Mammary epithelial cell (primary cell): ENCODE measurements at regions of chr17 and their contacts with region 1.

Region 1: DNA sequence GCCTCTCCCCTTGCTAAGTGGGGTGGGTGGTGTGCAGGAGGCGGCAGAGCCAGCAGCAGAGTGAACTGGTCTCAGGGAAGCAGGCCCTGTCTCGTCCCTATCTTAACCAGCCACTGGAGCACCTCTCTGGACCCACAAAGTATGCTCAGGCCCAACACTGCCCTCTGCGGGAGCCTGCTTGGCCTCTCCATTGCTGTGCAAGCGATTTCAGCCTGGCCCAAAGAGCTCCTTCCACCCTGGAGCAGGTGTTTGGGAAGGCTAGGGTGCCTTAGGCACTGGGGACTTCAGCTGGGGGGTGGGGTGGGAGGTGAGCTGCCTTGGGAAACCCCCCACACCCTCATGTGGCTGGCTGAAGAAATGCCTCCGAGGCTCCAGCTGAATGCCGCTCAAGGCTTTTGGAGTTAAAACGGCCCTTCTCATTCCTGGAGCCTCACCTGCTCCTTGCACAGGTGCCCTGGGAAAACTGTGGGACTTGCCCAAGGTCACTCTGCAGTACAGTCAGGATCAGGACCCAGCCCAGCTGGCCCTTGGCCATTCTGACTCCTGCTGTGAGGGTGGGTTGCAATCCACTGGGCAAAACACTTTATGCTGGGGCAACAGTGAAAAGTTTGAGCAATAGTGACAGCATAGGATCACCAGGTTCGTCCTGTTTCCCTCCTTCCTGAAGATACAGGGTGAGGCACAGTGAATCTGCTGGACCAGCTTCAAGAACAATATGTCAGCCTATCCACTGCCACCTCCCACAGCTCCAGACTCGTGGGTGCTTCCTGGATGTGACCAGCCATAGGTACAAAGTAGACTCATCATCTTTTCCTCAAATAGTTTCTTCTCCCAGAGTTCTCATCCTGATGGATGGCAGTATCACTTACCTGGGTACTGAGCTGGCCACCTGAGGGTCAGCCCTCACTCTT is 5.9 kb upstream of the UBE2O start:
- DNase-seq: peak; percentile 56
- H3K4me3 ChIP-seq: no peak overlapping the region
- H3K27ac ChIP-seq: no peak overlapping the region
- H3K4me1 ChIP-seq: no peaks in the 10 kb centered on the region
- H3K27me3 ChIP-seq: no peaks in the 10 kb centered on the region
- CTCF ChIP-seq: peak; percentile 71 to 88

Region 2: DNA sequence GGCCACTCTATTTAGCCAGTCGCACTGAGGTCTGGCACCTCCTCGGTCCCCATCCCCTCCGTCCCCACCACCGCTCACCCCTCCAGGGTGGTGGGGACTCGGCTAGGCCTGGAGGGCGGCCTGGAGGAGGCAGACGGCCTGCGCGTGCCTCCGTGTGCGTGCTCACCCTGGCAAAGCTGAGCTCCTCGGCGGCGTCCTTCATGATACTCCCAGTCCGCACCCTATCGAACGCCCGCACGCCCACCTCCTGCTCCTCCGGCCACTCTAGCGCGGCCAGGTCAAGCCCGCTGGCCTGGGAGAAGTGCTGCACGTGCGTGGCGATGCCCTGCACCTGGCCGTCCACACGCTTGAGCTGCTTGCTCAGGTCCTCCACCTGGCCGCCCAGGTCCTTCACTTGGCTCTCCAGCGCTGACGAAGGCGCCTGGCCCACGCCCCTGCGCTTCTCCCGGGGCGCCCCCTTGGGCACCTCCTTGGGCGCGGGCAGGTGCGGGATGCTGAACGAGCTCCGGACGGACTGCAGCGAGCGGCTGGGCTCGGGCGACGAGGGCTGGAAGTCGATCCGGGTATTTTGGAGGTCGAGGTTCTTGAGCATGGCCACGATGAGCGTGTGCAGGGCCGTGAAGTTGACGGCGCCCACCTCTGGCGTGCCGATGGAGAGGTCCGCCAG is 151.4 kb before region 1 on chr17:
- CTCF ChIA-PET with region 1: no interaction called
- dilution Hi-C with region 1: no loop called
- in situ Hi-C with region 1: no loop called
- intact Hi-C with region 1: loop called (anchors 2 kb)
- DNase-seq: no peak
- H3K4me3 ChIP-seq: no peak overlapping the region
- H3K27ac ChIP-seq: no peak overlapping the region
- H3K4me1 ChIP-seq: no peaks in the 10 kb centered on the region
- H3K27me3 ChIP-seq: no peaks in the 10 kb centered on the region
- CTCF ChIP-seq: no peak

Region 3: GRCh38 chr17:76474894-76475293 is 16.1 kb after region 1 on chr17:
- CTCF ChIA-PET with region 1: no interaction called
- dilution Hi-C with region 1: no loop called
- in situ Hi-C with region 1: no loop called
- intact Hi-C with region 1: no loop called
- DNase-seq: no peak
- H3K4me3 ChIP-seq: no peak overlapping the region
- H3K27ac ChIP-seq: no peak overlapping the region
- H3K4me1 ChIP-seq: no peaks in the 10 kb centered on the region
- H3K27me3 ChIP-seq: no peaks in the 10 kb centered on the region
- CTCF ChIP-seq: no peak

Region 4: GRCh38 chr17:76506408-76507349 is 47.8 kb after region 1 on chr17:
- CTCF ChIA-PET with region 1: no interaction called
- dilution Hi-C with region 1: loop called (anchors 5 kb)
- in situ Hi-C with region 1: no loop called
- intact Hi-C with region 1: loop called (anchors 1 kb)
- DNase-seq: peak; percentile 54
- H3K4me3 ChIP-seq: no peak overlapping the region
- H3K27ac ChIP-seq: no peak overlapping the region
- H3K4me1 ChIP-seq: peaks cover 8% of the 10 kb centered on the region
- H3K27me3 ChIP-seq: no peaks in the 10 kb centered on the region
- CTCF ChIP-seq: peak; percentile 85 to 95

Region 5: DNA sequence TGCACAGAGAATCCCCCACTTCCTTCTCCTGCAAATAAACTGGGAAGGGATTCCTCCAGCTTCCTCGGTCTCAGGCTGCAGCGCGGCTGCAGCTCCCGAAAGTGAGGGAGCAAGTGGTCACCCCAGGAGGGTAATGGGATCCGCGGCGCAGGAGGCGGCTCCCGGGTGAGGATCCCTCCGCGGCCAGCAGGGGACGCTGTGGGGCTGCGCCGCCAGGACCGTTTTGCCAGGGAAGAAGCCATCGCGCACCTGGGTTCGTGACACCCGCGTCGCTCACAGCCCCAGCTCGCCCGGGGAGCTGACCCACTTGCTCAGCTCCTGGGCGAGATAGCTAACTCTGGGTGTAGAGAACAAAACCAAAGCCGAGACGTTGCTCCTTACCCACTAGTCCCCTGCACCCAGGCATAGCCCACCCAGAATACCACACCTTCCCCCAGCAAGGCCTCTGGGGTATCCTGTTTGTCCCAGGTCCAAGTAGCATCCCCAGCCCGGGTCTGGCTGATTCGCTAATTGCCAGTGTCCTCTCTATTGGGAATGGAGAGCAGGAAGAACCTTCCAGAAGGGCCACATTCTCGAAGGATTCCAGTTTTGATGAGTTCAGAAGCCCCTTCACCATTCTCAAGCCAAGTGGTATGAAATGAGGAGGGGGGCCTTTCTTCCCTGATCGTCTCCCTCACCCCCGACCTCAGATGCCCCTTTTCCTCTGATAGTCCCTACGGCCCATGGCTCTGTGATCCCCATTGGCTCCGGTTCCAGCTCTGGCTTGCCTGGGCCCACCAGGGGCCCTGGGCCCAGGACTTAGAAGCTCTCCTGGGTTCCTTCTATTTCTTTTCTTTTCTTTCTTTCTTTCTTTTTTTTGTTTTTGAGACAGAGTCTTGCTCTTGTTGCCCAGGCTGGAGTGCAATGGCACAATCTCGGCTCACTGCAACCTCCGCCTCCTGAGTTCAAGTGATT is 64.5 kb after region 1 on chr17:
- CTCF ChIA-PET with region 1: no interaction called
- dilution Hi-C with region 1: no loop called
- in situ Hi-C with region 1: no loop called
- intact Hi-C with region 1: no loop called
- DNase-seq: peak; percentile 58
- H3K4me3 ChIP-seq: no peak overlapping the region
- H3K27ac ChIP-seq: no peak overlapping the region
- H3K4me1 ChIP-seq: peaks cover 27% of the 10 kb centered on the region
- H3K27me3 ChIP-seq: peaks cover 5% of the 10 kb centered on the region
- CTCF ChIP-seq: peak; percentile 89 to 100

Region 6: GRCh38 chr17:76547184-76547641 is 88.4 kb after region 1 on chr17:
- CTCF ChIA-PET with region 1: no interaction called
- dilution Hi-C with region 1: loop called (anchors 5 kb)
- in situ Hi-C with region 1: no loop called
- intact Hi-C with region 1: no loop called
- DNase-seq: no peak
- H3K4me3 ChIP-seq: no peak overlapping the region
- H3K27ac ChIP-seq: peak overlapping the region; percentile 68
- H3K4me1 ChIP-seq: peaks cover 56% of the 10 kb centered on the region
- H3K27me3 ChIP-seq: no peaks in the 10 kb centered on the region
- CTCF ChIP-seq: peak; percentile 48 to 73

Region 7: GRCh38 chr17:76569607-76570279 is 110.9 kb after region 1 on chr17:
- CTCF ChIA-PET with region 1: no interaction called
- dilution Hi-C with region 1: no loop called
- in situ Hi-C with region 1: no loop called
- intact Hi-C with region 1: no loop called
- DNase-seq: no peak
- H3K4me3 ChIP-seq: no peak overlapping the region
- H3K27ac ChIP-seq: no peak overlapping the region
- H3K4me1 ChIP-seq: no peaks in the 10 kb centered on the region
- H3K27me3 ChIP-seq: no peaks in the 10 kb centered on the region
- CTCF ChIP-seq: no peak

Region 8: DNA sequence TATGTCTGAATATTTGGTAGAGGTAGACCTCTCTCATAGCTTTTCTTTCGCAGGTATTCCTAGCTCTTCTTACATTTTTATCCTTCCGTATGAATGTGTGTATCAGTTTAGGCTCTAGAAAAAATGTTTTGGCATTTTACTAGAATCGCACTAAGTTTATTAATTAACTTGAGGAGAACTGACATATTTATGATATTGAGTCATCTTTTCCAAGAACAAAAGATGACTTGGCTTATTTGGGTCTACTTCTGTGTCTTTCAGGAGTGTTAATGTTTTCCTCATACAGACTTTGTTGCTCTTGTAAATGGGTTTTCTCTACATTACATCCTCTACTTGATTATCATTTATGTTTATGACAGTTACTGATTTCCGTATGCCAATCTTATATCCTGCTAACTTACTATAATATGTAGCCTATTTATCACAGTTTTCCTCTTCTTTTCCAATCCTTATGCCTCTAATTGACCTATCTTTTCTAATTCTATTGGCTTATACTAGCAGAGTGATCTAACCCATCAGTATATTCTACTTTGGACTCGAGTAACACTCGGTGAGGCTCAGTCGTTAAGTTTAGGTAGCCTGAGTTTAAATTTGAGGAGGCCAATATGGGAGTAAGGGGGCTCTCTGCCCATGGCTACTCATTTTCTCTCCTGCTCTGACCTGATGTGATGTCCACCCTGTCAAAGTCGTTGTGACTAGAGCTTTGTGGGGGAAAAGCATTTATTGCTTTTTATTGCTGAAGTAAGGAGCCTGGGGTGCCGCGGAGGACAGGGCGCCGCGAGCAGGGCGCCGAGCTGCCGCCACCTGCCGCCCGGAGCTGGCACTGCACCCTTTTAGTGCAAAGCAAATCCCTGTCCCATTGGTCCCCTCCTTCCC is 164.7 kb after region 1 on chr17:
- CTCF ChIA-PET with region 1: no interaction called
- dilution Hi-C with region 1: no loop called
- in situ Hi-C with region 1: no loop called
- intact Hi-C with region 1: loop called (anchors 2 kb)
- DNase-seq: peak; percentile 53
- H3K4me3 ChIP-seq: no peak overlapping the region
- H3K27ac ChIP-seq: peak overlapping the region; percentile 8
- H3K4me1 ChIP-seq: peaks cover 9% of the 10 kb centered on the region
- H3K27me3 ChIP-seq: no peaks in the 10 kb centered on the region
- CTCF ChIP-seq: peak; percentile 95 to 97

Region 9: GRCh38 chr17:77068915-77069314 is 610.1 kb after region 1 on chr17:
- CTCF ChIA-PET with region 1: no interaction called
- dilution Hi-C with region 1: no loop called
- in situ Hi-C with region 1: no loop called
- intact Hi-C with region 1: loop called (anchors 5 kb)
- DNase-seq: peak; percentile 54
- H3K4me3 ChIP-seq: no peak overlapping the region
- H3K27ac ChIP-seq: no peak overlapping the region
- H3K4me1 ChIP-seq: peaks cover 9% of the 10 kb centered on the region
- H3K27me3 ChIP-seq: peaks cover 5% of the 10 kb centered on the region
- CTCF ChIP-seq: no peak